Activated CD4-positive, alpha-beta T cell treated with anti-CD3 and anti-CD28 coated beads for 36 hours (primary cell): ENCODE measurements at regions of chr18 and their contacts with region 1.

Region 1: DNA sequence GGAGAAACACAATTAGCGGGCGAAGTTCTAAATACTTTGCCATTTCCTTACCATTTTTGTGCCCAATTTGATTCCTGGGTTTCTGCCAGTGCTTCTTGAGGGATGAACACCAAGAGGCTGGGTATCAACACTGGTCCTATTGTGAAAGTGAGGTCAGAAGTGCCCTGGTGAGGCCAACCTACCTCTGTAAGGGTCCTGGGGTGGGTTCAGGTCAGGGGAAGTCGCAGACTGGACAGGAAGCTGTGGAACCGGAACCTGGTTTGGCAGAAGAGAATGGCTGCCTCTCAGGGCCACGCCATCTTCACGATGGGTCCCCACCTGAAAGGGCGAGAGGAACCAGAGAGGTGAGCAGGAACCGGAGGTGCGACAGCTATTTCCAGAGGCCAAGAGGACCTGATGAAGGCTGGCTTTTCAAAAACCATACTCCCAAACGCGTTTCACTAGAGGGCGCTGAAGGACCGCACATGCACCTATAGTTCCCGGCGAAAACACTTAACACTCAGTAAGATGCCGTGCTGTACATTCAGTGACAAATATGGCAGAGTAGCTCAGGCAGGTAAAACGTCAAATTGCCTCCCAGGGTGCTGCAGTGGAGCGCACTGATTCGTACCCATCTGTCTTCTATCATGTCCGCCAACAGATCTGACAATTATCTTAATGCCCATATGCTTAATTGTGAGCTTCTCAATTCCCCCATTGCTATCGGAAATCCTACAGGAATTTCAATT is 275.3 kb upstream of the CCDC68 start:
- DNase-seq: peak; percentile 82
- ATAC-seq: peak; percentile 85
- H3K4me3 Mint-ChIP-seq: no peak overlapping the region
- H3K27ac Mint-ChIP-seq: no peak overlapping the region
- H3K4me1 Mint-ChIP-seq: peaks cover 2% of the 10 kb centered on the region
- H3K27me3 Mint-ChIP-seq: no peaks in the 10 kb centered on the region

Region 2: GRCh38 chr18:55124078-55124763 is 110.3 kb before region 1 on chr18:
- CTCF ChIA-PET with region 1: no interaction called
- POLR2A ChIA-PET with region 1: no interaction called
- intact Hi-C with region 1: no loop called
- DNase-seq: no peak
- ATAC-seq: no peak
- H3K4me3 Mint-ChIP-seq: no peak overlapping the region
- H3K27ac Mint-ChIP-seq: no peak overlapping the region
- H3K4me1 Mint-ChIP-seq: no peaks in the 10 kb centered on the region
- H3K27me3 Mint-ChIP-seq: no peaks in the 10 kb centered on the region

Region 3: DNA sequence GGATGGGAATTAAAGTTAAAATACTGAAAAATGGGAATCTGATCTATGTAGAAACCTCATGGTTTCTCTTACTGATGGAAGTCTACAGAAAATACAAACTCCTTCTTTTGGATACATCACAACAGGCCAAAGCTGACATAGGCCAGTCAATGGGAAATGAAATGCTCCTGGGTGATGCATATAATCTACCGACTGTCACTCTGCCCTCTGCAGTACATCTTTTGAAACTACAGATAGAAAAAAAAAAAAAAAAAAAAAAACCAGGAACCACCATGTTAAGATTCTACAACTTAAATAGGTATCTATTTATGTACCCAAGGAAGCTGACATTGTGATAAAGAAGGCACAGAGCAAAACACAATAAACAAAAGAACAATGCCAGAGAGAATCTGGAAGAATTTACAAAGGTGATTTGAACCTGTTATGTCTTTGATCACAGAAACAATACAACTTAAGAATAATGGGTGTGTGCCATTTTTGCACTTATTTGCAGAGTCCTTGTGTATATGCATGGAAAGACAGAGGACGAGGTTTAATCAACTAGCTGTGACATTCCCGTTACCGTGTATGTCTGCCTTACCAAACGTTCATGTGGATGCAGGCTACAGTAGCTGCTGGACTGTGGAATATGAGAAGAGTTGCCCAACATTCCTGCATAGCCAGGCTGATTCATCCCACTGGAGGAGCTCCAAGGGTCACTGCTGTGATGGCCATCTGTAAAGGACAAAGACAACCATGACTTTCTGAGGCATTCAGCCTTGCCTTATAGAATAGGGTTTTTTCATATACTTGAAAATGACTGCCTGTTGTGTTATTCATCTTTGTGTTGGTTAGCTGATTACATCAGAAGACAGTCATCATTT is 40.7 kb after region 1 on chr18:
- CTCF ChIA-PET with region 1: interaction called, 13 read pairs
- POLR2A ChIA-PET with region 1: no interaction called
- intact Hi-C with region 1: loop called (anchors 1 kb)
- DNase-seq: no peak
- ATAC-seq: no peak
- H3K4me3 Mint-ChIP-seq: no peak overlapping the region
- H3K27ac Mint-ChIP-seq: no peak overlapping the region
- H3K4me1 Mint-ChIP-seq: no peaks in the 10 kb centered on the region
- H3K27me3 Mint-ChIP-seq: no peaks in the 10 kb centered on the region

Region 4: GRCh38 chr18:55415258-55415871 is 180.8 kb after region 1 on chr18:
- CTCF ChIA-PET with region 1: interaction called, 7 read pairs
- POLR2A ChIA-PET with region 1: no interaction called
- intact Hi-C with region 1: loop called in 1 of 2 experiments (anchors 5 kb)
- DNase-seq: peak; percentile 89
- ATAC-seq: peak; percentile 74
- H3K4me3 Mint-ChIP-seq: no peak overlapping the region
- H3K27ac Mint-ChIP-seq: no peak overlapping the region
- H3K4me1 Mint-ChIP-seq: peaks cover 5% of the 10 kb centered on the region
- H3K27me3 Mint-ChIP-seq: peaks cover 4% of the 10 kb centered on the region

Region 5: DNA sequence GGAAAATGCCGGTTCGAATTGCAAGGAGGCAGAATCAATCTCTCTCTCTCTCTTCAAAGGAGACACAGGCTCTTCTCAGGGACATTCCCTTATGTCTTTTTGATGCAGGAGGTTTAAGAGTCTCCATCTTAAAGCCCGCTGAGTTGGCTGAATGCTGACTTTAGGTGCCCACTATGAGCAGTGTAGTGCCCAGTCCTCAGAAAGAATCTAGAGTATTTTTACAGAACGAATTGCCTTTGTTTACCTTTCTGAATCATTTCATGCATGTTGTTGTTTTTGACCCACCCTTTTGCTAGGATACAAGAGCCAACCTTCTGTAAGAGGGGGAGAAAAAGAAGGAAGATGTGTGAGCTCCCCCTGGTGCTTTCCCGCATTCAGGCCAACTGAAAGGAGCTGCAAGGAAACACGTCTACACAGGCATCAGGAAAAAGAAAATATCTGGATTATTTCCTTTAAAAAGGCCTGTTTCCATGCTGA is 547.0 kb after region 1 on chr18:
- CTCF ChIA-PET with region 1: no interaction called
- POLR2A ChIA-PET with region 1: no interaction called
- intact Hi-C with region 1: loop called in 1 of 2 experiments (anchors 2 kb)
- DNase-seq: peak; percentile 6
- ATAC-seq: no peak
- H3K4me3 Mint-ChIP-seq: no peak overlapping the region
- H3K27ac Mint-ChIP-seq: no peak overlapping the region
- H3K4me1 Mint-ChIP-seq: peaks cover 13% of the 10 kb centered on the region
- H3K27me3 Mint-ChIP-seq: peaks cover 44% of the 10 kb centered on the region

Region 6: DNA sequence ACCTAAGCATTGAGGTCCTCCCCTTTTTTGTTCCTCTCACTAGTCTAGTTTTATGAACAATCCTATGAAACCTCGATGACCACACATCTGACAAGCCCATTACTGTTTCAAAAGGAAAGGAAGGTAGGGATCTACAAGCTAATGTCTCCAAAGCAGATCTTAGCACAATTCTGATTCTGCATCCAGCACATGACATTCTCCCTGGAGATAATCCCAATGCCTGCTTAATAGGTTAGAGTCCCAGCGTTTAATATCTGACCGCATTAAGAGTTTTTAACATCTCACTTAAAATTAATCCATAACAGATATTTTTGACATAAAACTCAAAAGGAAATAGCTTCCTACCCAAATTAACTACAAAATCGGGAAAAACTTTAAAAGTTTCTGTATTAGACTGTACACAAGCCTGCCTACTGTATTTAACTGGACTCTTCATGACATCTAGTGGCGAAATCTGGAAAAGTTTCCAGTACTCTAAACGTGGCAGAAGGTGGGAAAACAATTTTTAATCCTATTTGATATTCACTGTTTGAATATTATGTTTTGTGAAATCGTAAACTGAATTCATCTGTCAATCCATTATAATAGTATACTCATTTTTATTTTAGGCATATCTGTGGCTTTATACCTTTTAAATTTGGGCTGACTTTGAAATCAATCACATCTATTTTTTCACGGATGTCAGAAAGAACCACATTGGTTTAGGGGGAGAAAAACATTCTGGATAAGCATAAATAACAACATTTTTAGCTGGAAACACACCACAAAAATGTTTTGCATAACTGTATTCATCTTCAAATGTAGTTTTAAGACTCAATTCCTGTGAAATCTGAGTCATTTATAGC is 1341.5 kb after region 1 on chr18:
- CTCF ChIA-PET with region 1: interaction called, 16 read pairs
- POLR2A ChIA-PET with region 1: no interaction called
- intact Hi-C with region 1: loop called (anchors 1 to 10 kb)
- DNase-seq: no peak
- ATAC-seq: no peak
- H3K4me3 Mint-ChIP-seq: no peak overlapping the region
- H3K27ac Mint-ChIP-seq: no peak overlapping the region
- H3K4me1 Mint-ChIP-seq: no peaks in the 10 kb centered on the region
- H3K27me3 Mint-ChIP-seq: peaks cover 11% of the 10 kb centered on the region